Posterior cingulate gyrus (tissue), 11 donors: ENCODE measurements at regions of chr20 and their contacts with region 1.

Region 1: GRCh38 chr20:60057123-60057801 is 99.0 kb downstream of the CDH26 start:
- DNase-seq: peak; percentile 39 to 95 (median 74)

Region 2: GRCh38 chr20:59940174-59940971 is 116.9 kb before region 1 on chr20 and contains the starts of genes FAM217B and PPP1R3D:
- intact Hi-C with region 1: loop called (anchors 10 kb)
- DNase-seq: peak; percentile 86 to 99 (median 95)

Region 3: GRCh38 chr20:60365056-60365666 is 307.9 kb after region 1 on chr20:
- intact Hi-C with region 1: loop called (anchors 10 kb)
- DNase-seq: no peak